Colonic mucosa (tissue), 4 donors: ENCODE measurements at regions of chr1 and their contacts with region 1.

Region 1: DNA sequence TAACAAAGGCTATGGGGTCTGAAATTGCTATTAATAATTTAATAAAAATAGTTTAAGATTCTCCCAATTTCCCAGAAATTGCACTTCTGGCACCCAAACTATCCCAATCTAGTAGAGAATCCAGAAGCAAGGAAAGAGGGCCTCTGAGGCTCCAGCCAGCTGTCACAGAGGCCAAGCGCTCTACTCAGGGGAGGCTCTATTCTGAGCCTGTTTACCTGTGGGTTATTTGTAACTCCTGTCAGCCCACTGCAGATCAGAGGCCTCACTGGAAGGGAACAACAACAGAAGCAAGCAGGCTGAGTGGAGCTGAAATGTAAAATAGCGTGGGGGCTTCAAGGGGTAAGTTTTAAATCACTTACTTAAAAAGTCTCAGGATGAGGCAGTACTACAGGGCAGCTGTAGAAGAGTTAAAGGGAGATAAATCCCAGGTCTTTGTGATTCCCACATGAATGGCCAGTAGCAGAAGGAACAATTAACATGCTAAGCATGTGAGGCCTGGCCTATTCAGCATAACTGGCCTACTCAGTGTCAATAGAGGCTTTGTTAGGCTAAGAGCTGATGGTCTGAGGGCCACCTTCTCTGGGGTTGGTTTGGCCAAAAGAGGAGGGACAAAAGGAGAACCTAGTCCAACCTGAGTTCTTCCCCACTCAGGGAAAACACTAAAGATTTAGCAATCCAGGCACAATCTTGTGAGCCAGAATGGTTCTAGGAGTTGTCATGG is 12.8 kb downstream of the ZNF687 start:
- DNase-seq: no peak
- H3K4me3 ChIP-seq: no peak overlapping the region
- H3K27ac ChIP-seq: no peak overlapping the region
- H3K4me1 ChIP-seq: no peaks in the 10 kb centered on the region
- H3K27me3 ChIP-seq: no peaks in the 10 kb centered on the region
- CTCF ChIP-seq: no peak

Region 2: GRCh38 chr1:151340870-151341754 is 46.2 kb after region 1 on chr1:
- intact Hi-C with region 1: loop called (anchors 5 kb)
- DNase-seq: peak; percentile 69
- H3K4me3 ChIP-seq: no peak overlapping the region
- H3K27ac ChIP-seq: no peak overlapping the region
- H3K4me1 ChIP-seq: peaks cover 3% of the 10 kb centered on the region
- H3K27me3 ChIP-seq: no peaks in the 10 kb centered on the region
- CTCF ChIP-seq: peak; percentile 61

Region 3: DNA sequence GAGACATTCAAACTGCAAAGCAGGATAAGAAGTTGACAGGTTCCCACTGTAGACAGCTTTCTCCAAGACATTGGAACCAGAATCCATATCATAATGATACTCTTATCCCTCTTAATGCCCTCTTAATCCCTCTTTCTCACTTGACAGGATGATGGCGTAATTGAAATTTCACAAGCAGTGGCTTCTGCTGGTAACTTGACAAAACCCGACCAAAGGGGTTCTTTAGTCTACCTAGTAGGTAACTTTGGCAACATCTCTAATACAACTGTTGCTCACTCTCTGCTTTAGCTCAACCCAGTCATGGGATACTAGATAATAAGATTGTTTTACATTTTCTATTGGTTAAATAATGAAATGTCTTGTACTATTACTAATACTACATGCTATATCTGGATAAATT is 664.1 kb after region 1 on chr1:
- intact Hi-C with region 1: no loop called
- DNase-seq: no peak
- H3K4me3 ChIP-seq: no peak overlapping the region
- H3K27ac ChIP-seq: no peak overlapping the region
- H3K4me1 ChIP-seq: no peaks in the 10 kb centered on the region
- H3K27me3 ChIP-seq: no peaks in the 10 kb centered on the region
- CTCF ChIP-seq: no peak